IMR-90 (cell line): ENCODE measurements at regions of chr3 and their contacts with region 1.

Region 1: DNA sequence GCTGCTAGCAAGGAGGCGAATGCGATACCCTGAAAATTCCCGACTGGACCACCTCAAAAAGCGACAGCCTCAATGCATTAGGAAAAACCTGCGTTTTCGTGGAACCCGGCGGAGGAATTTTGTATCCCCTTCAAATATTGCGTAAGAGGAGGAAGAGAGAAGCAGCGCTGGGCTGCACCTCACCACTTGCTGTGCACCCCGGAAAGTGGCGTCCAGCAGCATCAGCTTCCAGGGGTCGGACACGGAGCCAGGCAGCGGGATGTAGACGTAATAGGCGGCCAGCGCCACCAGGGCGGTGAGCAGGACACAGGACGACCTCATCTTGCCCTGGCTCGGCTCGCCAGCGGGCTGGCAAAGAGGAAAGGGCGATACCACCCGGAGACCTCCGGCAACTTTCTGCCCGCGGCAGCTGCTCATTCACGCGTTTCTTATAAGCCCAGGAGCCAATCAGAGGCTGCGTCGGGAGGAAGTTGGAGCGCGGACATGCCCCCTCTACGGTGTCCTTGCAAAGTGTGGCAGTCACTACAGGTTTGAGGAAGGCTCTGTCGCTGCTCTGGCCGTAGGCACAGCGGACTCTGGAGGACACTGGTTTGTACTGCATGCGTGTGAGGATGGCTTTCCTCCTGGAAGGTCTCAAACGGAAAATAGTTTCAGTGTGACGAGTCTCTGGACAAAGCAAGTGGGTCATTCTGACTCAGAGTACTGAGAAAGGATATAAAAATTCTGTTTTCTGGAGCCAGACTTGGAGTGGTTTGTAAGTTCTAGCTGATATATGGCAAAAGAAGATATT is at the start of gene NCEH1:
- DNase-seq: peak; percentile 99
- ATAC-seq: peak; percentile 95
- H3K4me3 ChIP-seq: peak within 1 kb of the TSS; percentile 77
- H3K27ac ChIP-seq: peak within 1 kb of the TSS; percentile 88
- H3K4me1 ChIP-seq: peaks cover 8% of the 10 kb centered on the region
- H3K27me3 ChIP-seq: no peaks in the 10 kb centered on the region
- CTCF ChIP-seq: peak; percentile 93
- POLR2A ChIP-seq: peak; percentile 97
- RAD21 ChIP-seq: peak; percentile 79
- total RNA-seq, gene NCEH1: 23.3 and 28.9 TPM in 2 replicates

Region 2: DNA sequence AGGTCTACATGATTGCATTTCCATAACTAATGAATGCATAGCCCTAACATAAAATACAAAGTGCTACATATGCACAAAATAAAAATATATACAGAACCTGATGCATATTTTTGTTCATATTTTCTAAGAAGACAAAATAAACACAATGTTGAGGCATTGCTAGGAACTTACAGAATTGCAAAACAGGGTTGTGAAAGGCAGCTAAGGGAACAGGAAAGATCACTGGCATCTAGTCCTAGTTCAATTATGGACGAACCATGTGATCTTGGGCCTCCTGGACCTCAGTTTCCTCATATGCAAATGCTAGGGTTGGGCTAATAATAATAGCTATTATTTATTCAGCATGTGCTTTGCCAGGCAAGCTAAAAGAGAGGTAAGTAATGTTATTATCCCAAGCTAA is 15.5 kb after region 1 on chr3:
- CTCF ChIA-PET with region 1: interaction called, 4 read pairs
- POLR2A ChIA-PET with region 1: no interaction called
- dilution Hi-C with region 1: no loop called
- in situ Hi-C with region 1: no loop called
- intact Hi-C with region 1: loop called (anchors 2 kb)
- DNase-seq: peak; percentile 32
- ATAC-seq: peak; percentile 82
- H3K4me3 ChIP-seq: no peak overlapping the region
- H3K27ac ChIP-seq: peak overlapping the region; percentile 23; the same call in 1 of the 2 replicates
- H3K4me1 ChIP-seq: peaks cover 4% of the 10 kb centered on the region
- H3K27me3 ChIP-seq: no peaks in the 10 kb centered on the region
- CTCF ChIP-seq: no peak
- POLR2A ChIP-seq: no peak
- RAD21 ChIP-seq: no peak

Region 3: GRCh38 chr3:172750368-172751174 is 39.7 kb after region 1 on chr3 and contains the start of gene ECT2:
- CTCF ChIA-PET with region 1: interaction called, 3 read pairs
- POLR2A ChIA-PET with region 1: interaction called, 3 read pairs
- dilution Hi-C with region 1: no loop called
- in situ Hi-C with region 1: no loop called
- intact Hi-C with region 1: loop called (anchors 1 kb)
- DNase-seq: peak; percentile 100
- ATAC-seq: peak; percentile 98
- H3K4me3 ChIP-seq: peak within 1 kb of the TSS; percentile 83
- H3K27ac ChIP-seq: peak within 1 kb of the TSS; percentile 74
- H3K4me1 ChIP-seq: no peaks in the 10 kb centered on the region; the same call in 1 of the 2 replicates
- H3K27me3 ChIP-seq: no peaks in the 10 kb centered on the region
- CTCF ChIP-seq: peak; percentile 89
- POLR2A ChIP-seq: no peak; the same call in 1 of the 2 replicates
- RAD21 ChIP-seq: peak; percentile 72
- total RNA-seq, gene ECT2: 37.8 and 55.8 TPM in 2 replicates

Region 4: DNA sequence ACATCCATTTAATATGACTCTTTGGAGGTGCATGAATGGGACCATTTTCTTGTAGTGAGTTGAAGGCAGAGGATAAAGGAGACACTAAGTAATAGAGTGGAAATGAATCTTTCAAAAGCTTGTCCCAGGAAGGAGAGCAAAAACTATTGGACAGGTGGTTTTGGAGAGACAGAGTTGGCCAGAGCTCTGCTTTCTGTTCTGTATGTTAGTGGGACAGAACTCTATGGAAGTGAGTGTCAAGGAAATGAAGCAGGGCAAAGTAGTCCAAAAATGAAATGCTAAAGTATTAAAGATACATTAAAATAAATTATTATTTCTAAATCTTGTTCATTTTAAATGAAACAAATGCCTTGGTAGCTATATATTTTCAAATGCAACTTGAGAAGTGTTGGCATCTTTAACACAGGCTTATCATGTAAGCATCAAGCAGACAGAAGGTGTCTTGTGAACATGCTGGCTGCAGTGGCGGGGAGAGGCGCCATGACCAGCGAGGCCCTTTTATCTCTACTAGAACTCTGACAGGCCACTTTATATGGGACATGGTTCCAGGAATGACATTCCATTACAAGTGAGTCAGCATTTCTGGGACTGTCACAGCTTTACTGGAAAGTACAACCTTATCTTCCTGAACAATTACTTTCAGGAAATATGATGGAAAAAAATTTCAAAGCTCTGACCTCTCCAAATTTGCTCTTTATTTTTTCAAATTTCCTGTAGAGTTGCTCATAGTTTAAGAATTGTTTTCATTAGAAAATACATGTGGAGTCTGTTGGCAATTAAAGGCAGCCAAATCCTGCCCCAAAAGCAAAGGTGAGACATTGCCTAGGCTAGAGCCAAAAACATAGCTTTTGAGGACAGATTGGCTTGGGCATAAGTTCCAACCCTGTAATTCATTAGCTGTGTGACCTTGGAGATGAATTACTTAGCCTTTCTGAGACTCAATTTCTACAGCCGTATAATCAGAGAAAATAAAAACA is 146.2 kb after region 1 on chr3:
- CTCF ChIA-PET with region 1: no interaction called
- POLR2A ChIA-PET with region 1: no interaction called
- dilution Hi-C with region 1: no loop called
- in situ Hi-C with region 1: no loop called
- intact Hi-C with region 1: no loop called
- DNase-seq: no peak
- ATAC-seq: no peak
- H3K4me3 ChIP-seq: no peak overlapping the region
- H3K27ac ChIP-seq: no peak overlapping the region
- H3K4me1 ChIP-seq: no peaks in the 10 kb centered on the region
- H3K27me3 ChIP-seq: peaks cover 3% of the 10 kb centered on the region; the same call in 1 of the 2 replicates
- CTCF ChIP-seq: no peak
- POLR2A ChIP-seq: no peak
- RAD21 ChIP-seq: no peak